Right cardiac atrium (tissue), 5 donors: ENCODE measurements at regions of chr13 and their contacts with region 1.

Region 1: GRCh38 chr13:45464687-45465453 is at the start of gene COG3:
- DNase-seq: peak; percentile 94 to 98 (median 98)
- ATAC-seq: peak; percentile 99
- H3K4me3 ChIP-seq: peak within 1 kb of the TSS; percentile 76
- H3K27ac ChIP-seq: peak within 1 kb of the TSS; percentile 95
- H3K4me1 ChIP-seq: peaks cover 3% of the 10 kb centered on the region
- H3K27me3 ChIP-seq: no peaks in the 10 kb centered on the region
- total RNA-seq, gene COG3: 16.2 to 23.9 (median 17.9) TPM

Region 2: DNA sequence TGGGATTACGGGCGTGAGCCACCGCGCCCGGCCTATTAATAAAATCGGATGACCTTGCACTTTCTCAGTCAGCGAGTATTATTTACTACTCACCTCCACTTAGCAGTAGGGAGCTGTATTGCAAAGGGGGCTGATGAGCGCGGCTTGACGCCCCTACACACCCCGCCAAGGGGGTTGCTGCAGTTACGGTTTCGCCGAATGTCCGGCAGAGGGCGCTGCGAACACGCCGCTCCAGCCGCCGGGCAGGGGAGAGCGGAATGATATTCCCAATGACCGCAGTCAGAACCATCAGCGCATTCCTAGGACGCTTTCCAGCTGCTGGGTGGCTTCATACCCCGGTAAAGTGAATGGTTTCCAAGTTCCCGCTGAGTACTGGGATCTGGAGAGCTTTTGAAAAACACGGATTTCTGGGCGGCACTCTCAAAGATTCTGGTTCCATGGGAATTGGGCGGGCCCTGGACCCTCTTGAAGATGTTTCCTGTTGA is 93.9 kb before region 1 on chr13:
- intact Hi-C with region 1: loop called in 2 of 4 experiments (anchors 10 kb)
- DNase-seq: peak; percentile 76 to 90 (median 89)
- ATAC-seq: peak; percentile 82 to 90
- H3K4me3 ChIP-seq: no peak overlapping the region
- H3K27ac ChIP-seq: no peak overlapping the region
- H3K4me1 ChIP-seq: no peaks in the 10 kb centered on the region
- H3K27me3 ChIP-seq: no peaks in the 10 kb centered on the region

Region 3: GRCh38 chr13:45417790-45418534 is 46.9 kb before region 1 on chr13 and contains the start of gene SLC25A30:
- intact Hi-C with region 1: loop called in 1 of 4 experiments (anchors 10 kb)
- DNase-seq: peak; percentile 97 to 98 (median 98)
- ATAC-seq: peak; percentile 98 to 99
- H3K4me3 ChIP-seq: peak within 1 kb of the TSS; percentile 55
- H3K27ac ChIP-seq: peak within 1 kb of the TSS; percentile 82
- H3K4me1 ChIP-seq: peaks cover 4% of the 10 kb centered on the region
- H3K27me3 ChIP-seq: no peaks in the 10 kb centered on the region
- total RNA-seq, gene SLC25A30: 54.9 to 72.2 (median 63.7) TPM